A549 (cell line): ENCODE measurements at regions of chr22 and their contacts with region 1.

Region 1: DNA sequence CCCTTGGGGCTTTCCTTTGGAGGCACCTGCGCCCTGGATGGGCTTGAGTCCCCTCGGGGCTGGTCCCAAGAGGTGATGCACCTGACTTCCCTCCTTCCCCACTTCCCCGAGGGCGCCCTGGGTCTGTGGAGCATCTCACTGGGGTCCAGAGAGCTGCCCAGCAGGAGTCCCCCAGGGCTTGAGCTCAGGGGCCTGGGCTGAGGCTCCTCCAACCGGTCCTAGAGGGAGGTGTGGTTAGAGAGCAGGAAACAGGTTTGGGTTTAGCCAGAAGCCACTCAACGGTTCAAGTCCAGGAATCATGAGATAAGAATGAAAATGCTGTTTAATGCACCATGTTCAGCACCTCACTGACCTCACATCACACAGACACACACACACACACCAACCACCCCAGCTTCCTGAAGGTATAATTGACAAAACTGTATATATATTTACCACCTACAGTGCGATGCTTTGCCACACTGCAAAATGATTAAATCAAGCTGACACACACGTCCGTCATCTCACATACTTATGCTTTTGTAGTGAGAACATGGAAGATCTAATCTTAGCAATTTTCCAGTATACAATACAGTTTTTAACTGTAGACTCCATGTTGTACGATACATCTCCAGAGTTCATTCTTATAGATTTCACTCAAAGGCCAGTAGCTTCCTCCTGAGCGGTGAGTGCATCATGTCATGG is 628 bp upstream of the IGLL1 start:
- DNase-seq: no peak
- ATAC-seq: no peak
- H3K4me3 ChIP-seq: no peak overlapping the region
- H3K27ac ChIP-seq: no peak overlapping the region
- H3K4me1 ChIP-seq: no peaks in the 10 kb centered on the region
- CTCF ChIP-seq: no peak
- EP300 ChIP-seq: no peak
- POLR2A ChIP-seq: no peak
- RAD21 ChIP-seq: no peak

Region 2: DNA sequence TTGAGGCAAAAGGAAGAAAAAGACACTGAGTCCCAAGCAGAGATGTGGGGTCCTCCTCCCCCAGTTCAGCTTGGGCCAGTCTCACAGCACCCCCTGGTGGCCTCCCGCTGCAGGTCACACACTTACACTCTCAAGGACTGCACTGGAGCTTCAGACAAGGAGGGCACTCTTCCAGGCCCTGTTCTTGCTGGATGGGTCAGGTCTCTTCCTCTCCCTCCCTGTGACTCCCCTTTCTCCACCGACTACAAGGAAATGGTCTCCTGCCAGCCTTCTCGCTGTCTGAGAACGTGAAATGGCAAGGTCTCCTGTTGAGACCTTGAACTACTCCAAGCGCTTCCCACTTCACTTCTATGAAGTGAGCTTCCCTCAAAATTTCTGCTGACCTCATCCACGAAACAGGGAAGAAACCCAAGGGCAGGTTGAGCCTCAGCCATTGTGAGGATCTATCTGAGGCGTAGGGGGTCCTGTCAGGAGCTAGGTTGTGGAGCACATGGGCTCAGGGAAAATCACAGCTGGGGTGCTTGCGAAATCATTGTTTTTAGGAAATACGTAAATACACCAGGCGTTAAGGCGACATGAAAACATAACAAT is 10.6 kb after region 1 on chr22:
- CTCF ChIA-PET with region 1: interaction called, 11 read pairs
- POLR2A ChIA-PET with region 1: no interaction called
- DNase-seq: peak; percentile 38 to 62
- ATAC-seq: peak; percentile 87 to 98
- H3K4me3 ChIP-seq: no peak overlapping the region
- H3K27ac ChIP-seq: no peak overlapping the region
- H3K4me1 ChIP-seq: no peaks in the 10 kb centered on the region
- CTCF ChIP-seq: peak; percentile 69
- EP300 ChIP-seq: no peak
- POLR2A ChIP-seq: no peak
- RAD21 ChIP-seq: peak; percentile 74 to 88